Dorsolateral prefrontal cortex (tissue), 120 donors: ENCODE measurements at regions of chr10 and their contacts with region 1.

Region 1: DNA sequence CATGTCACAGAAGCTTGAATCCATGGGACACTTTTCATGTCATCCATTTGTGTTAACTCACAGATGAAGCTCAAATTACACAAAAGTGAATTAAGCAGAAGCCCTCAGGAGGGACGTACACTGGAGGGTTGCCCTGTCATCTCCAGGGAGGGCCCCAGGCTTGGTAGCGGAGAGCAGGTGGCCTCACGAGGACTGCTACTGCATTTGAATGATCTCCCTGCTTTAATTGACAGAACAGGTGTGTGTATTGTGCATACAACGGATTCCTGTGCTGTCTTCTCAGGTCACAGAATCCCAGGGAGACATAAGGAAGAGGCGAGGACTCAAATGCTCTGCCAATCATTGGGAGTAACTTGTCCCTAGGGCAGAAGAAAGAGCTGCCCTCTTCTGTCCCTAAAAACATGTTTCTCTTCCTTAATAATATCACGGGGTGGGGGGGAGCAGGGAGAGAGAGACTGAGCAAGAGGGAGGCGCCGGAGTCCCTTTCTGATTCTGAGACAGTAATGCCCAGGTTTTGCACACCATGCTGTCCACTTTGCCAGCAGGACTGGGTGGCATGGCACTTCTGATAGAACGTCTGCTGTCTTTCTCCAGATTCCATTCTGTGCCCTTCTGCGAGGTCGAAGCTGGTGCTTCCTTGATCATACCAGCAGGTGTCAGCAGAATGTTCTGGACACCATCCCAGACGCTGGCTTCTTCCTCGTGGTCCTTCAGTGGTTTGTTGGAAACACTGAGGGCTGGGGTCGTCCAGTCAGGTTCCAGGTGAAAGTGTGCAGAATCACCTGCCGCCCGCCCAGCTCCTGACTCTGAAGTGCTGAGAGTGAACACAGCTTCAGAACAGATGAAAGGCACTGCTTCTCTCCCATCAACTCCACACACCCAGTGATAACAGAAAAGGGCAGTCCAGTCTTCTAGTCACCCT is 26.2 kb upstream of the RASGEF1A start:
- DNase-seq: peak in 9 of 10 donors; percentile 35 to 72 (median 68)
- H3K4me3 ChIP-seq: peak overlapping the region in 5 of 59 donors; percentile 4 to 26 (median 16)
- H3K27ac ChIP-seq: no peak overlapping the region
- H3K27me3 ChIP-seq: no peaks in the 10 kb centered on the region
- CTCF ChIP-seq: peak; percentile 27 to 87 (median 74)

Region 2: GRCh38 chr10:43082746-43083145 is 210.3 kb before region 1 on chr10:
- intact Hi-C with region 1: no loop called
- DNase-seq: no peak
- H3K4me3 ChIP-seq: no peak overlapping the region
- H3K27ac ChIP-seq: no peak overlapping the region
- H3K27me3 ChIP-seq: peaks cover 0 to 39% (median 16%) of the 10 kb centered on the region in 45 donors
- CTCF ChIP-seq: no peak

Region 3: GRCh38 chr10:43461950-43462349 is 168.9 kb after region 1 on chr10:
- intact Hi-C with region 1: loop called in 1 of 2 experiments (anchors 2 kb)
- DNase-seq: peak in 1 of 10 donors; percentile 9
- H3K4me3 ChIP-seq: peak overlapping the region in 48 of 59 donors; percentile 2 to 61 (median 40)
- H3K27ac ChIP-seq: peak overlapping the region in 12 of 59 donors; percentile 3 to 65 (median 54)
- H3K27me3 ChIP-seq: no peaks in the 10 kb centered on the region
- CTCF ChIP-seq: peak; percentile 66 to 94 (median 78)

Region 4: GRCh38 chr10:43616697-43617370 is 323.8 kb after region 1 on chr10:
- intact Hi-C with region 1: no loop called
- DNase-seq: no peak
- H3K4me3 ChIP-seq: no peak overlapping the region
- H3K27ac ChIP-seq: no peak overlapping the region
- H3K27me3 ChIP-seq: no peaks in the 10 kb centered on the region
- CTCF ChIP-seq: no peak